ENCODE measurements at regions of chr4 and their contacts with region 1.

Region 1: GRCh38 chr4:153181293-153181692 is 22.9 kb upstream of the TRIM2 start:
- DNase-seq: no peak
- CTCF ChIP-seq: no peak

Region 2: DNA sequence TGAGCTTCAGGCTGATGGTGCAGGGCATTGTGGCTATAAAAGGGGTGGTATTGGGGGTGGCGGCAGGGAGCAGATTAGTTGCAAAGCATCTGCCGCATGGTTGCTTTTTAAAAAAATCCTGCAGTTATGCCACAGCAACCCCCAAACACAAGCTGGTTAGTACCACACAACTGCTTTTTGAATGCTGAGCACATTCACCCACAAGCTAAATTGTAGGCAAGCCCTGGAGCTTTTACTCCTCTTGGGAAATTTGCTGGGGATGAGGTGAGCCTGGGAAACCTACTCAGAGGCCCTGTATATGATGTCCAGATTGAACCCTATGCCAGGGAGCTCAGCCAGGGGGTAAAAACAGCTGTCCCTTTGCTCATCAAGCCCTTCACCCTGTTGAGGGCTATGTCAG is 10.9 kb before region 1 on chr4:
- CTCF ChIA-PET with region 1: interaction called, 10 read pairs
- POLR2A ChIA-PET with region 1: no interaction called
- DNase-seq: no peak
- CTCF ChIP-seq: no peak